ENCODE measurements at regions of chr10 and their contacts with region 1.

Region 1: GRCh38 chr10:119892188-119893065 is at the start of gene SEC23IP:
- DNase-seq: peak; percentile 95
- CTCF ChIP-seq: no peak

Region 2: DNA sequence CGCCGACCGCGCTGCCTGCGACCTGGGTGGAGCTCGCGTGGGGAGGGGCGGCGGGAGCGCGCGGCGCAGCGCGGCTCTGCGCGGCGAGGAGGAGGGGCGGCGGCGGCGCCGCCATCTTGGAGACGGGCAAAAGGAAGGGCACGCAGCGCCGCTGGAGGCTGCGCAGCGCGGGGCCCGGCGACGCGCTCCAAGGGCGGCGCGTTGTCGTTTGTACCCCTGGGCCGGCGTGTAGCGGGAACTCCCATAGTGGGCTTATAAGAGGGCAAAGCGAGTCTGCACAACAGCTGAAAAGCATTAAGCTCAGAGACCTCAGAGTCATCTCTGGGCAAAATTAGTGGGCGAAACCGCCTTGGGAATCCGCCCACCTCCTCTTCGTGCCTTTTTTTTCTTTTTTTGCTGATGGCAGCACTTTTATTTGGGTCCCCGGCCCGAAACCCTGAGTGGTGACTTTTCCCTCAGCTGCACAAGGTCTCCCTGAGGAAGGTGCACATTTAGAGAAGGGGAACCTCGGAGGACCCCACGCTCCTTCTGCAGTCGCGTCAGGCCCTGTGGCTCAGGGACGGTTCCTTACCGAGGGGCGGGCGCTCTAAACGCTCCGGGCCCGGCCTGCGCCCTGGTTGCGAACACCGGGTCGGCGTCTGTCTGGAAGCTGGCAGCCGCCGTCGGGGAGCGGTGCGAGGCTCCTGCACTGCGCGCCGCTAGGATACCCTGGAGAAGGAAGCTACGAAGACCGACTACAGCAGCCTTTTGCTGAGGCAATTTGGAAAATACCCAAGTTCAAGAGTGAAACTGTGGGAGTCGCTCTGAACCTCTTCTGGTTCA is 19.4 kb before region 1 on chr10:
- CTCF ChIA-PET with region 1: interaction called, 6 read pairs
- POLR2A ChIA-PET with region 1: interaction called, 15 read pairs
- DNase-seq: peak; percentile 91
- CTCF ChIP-seq: no peak

Region 3: DNA sequence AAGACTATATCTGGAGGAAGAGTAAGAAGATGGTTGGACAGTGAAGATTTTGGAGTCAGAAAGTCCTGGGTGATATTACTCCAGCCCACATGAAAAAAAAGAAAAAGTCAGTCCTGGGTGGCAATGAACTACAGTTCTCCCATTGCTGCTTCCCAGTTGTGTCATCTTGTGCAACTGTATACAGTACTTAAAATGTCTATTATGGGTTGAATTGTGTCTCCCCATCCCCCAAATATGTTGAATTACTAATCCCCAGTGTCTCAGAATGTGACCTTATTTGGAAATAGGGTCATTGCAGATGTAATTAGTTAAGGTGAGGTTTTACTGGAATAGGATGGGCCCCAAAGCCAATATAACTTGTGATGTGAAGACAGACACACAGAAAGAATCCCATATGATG is 15.7 kb after region 1 on chr10:
- CTCF ChIA-PET with region 1: interaction called, 10 read pairs
- POLR2A ChIA-PET with region 1: interaction called, 3 read pairs
- DNase-seq: no peak
- CTCF ChIP-seq: no peak

Region 4: GRCh38 chr10:119928411-119928810 is 36.0 kb after region 1 on chr10:
- CTCF ChIA-PET with region 1: no interaction called
- POLR2A ChIA-PET with region 1: no interaction called
- DNase-seq: no peak
- CTCF ChIP-seq: no peak

Region 5: DNA sequence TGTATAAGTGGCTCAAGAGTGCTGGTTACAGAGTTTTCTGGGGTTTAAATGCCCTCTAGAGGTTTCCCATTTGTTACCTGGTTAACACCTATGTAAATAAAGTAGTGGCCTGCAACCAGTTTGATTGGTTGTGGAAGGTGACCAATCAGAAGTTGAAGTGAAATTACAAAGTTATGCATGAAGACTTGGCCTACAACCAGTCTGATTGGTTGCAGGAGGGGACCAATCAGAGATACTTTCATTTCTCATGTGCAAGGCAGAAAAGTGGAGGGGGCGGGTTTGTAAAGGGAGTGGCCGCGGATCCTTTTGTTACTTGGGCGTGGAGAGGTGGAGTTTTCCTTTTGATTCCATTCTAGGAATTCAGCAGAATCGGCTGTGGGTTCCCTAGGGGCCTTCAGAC is 80.8 kb after region 1 on chr10:
- CTCF ChIA-PET with region 1: no interaction called
- POLR2A ChIA-PET with region 1: no interaction called
- DNase-seq: no peak
- CTCF ChIP-seq: no peak